ENCODE measurements at regions of chr2 and their contacts with region 1.

Region 1: GRCh38 chr2:231795291-231796040 is 9.2 kb downstream of the COPS7B start:
- DNase-seq: no peak
- H3K4me3 ChIP-seq: no peak overlapping the region
- CTCF ChIP-seq: peak; percentile 21

Region 2: DNA sequence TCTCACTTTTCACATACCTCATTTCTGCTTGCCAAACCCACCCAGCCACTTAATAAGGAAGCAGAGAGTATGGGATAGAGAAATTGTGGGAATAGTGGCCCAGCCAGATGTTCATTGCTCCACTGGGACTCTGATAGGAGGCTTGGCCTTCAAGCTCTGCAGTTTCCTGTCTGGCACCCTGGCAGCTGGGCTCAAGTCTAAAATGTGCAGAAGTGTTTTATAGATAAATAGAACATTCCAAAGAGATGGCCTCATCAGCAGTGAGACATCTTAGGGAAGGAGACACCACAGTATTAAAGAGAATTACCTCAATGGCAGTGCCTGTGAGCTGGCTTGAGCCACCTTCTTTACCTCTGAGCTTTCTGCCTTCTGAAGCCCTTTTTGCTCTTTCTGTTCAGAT is 15.4 kb after region 1 on chr2:
- CTCF ChIA-PET with region 1: interaction called, 31 read pairs
- POLR2A ChIA-PET with region 1: no interaction called
- DNase-seq: peak; percentile 31
- H3K4me3 ChIP-seq: no peak overlapping the region
- CTCF ChIP-seq: no peak

Region 3: DNA sequence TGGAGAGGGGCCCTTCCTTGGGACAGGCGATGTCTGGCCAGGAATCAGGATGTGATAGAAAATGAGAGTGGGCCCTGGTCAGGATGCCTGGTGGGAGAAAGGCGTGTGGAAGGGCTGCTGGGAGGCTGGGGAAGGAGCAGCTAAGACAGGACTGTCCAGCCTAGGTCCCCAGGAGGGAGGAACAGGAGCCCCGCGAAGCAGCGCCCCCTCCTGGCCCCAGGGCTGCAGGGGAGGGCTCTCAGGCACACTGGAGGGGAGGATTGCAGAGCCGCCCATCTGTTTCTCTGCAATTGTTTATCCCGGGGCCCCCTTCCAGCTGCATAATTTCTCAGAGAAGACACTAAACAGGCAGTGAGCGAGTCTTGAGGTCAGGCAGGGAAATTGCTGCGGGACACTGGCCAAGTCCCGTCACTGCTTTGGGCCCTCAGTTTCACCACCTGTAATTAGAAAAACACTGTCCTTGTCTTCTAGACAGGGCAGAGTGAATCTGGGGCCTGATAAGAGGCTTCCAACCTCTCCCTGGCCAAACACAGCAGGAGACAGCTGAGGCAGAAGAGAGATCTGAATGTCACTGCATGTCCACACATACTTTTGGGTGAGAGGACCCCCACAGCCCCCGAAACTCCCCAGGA is 134.6 kb after region 1 on chr2:
- CTCF ChIA-PET with region 1: no interaction called
- POLR2A ChIA-PET with region 1: no interaction called
- DNase-seq: no peak
- H3K4me3 ChIP-seq: no peak overlapping the region
- CTCF ChIP-seq: peak; percentile 38

Measured in AG04449 (cell line).